ENCODE measurements at regions of chr7 and their contacts with region 1.

Region 1: DNA sequence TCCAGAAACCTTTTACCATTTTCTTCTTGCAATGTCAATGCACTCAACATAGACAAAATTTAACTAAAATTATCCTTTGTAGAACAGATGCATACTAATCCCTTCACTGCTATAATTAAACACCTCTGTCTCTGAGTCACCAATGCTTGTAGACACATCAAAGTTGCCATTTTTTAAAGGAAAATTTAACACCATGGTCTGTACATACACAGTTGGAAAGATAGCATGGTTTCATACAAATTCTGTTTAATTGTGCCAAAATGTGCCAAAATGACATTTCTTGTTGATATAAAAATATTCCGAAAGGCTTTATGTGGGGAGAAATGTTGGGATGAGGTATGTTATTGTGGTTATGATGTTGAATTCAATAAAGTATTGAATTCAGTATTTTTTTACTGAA is 125.8 kb downstream of the NEUROD6 start:
- DNase-seq: no peak
- H3K4me3 ChIP-seq: no peak overlapping the region
- H3K27ac ChIP-seq: no peak overlapping the region
- H3K4me1 ChIP-seq: no peaks in the 10 kb centered on the region
- H3K27me3 ChIP-seq: 0 out of 2 replicates have a peak, but pooled peaks cover 10% of the 10 kb centered on the region
- CTCF ChIP-seq: no peak

Region 2: GRCh38 chr7:31204071-31204470 is 10.7 kb before region 1 on chr7:
- CTCF ChIA-PET with region 1: no interaction called
- POLR2A ChIA-PET with region 1: no interaction called
- intact Hi-C with region 1: loop called (anchors 1 kb)
- DNase-seq: no peak
- H3K4me3 ChIP-seq: no peak overlapping the region
- H3K27ac ChIP-seq: no peak overlapping the region
- H3K4me1 ChIP-seq: no peaks in the 10 kb centered on the region
- H3K27me3 ChIP-seq: peaks cover 48% of the 10 kb centered on the region
- CTCF ChIP-seq: no peak

Region 3: GRCh38 chr7:31336202-31337001 is 121.7 kb after region 1 on chr7:
- CTCF ChIA-PET with region 1: no interaction called
- POLR2A ChIA-PET with region 1: no interaction called
- intact Hi-C with region 1: no loop called
- DNase-seq: no peak
- H3K4me3 ChIP-seq: no peak overlapping the region
- H3K27ac ChIP-seq: no peak overlapping the region
- H3K4me1 ChIP-seq: no peaks in the 10 kb centered on the region
- H3K27me3 ChIP-seq: peaks cover 37% of the 10 kb centered on the region
- CTCF ChIP-seq: no peak